Naive thymus-derived CD4-positive, alpha-beta T cell (primary cell): ENCODE measurements at regions of chr2 and their contacts with region 1.

Region 1: GRCh38 chr2:53970724-53971602 is at the start of gene PSME4:
- DNase-seq: peak; percentile 80 to 95 (median 90)
- ATAC-seq: peak; percentile 97
- H3K4me3 ChIP-seq: peak within 1 kb of the TSS; percentile 84
- H3K4me3 Mint-ChIP-seq: peak within 1 kb of the TSS; percentile 89 to 100 (median 96)
- H3K27ac ChIP-seq: peak within 1 kb of the TSS; percentile 93
- H3K27ac Mint-ChIP-seq: peak within 1 kb of the TSS; percentile 91 to 99 (median 95)
- H3K4me1 ChIP-seq: peaks cover 17 to 21% of the 10 kb centered on the region in 2 donors
- H3K4me1 Mint-ChIP-seq: peaks cover 37 to 65% (median 54%) of the 10 kb centered on the region in 7 donors
- H3K27me3 ChIP-seq: no peaks in the 10 kb centered on the region
- H3K27me3 Mint-ChIP-seq: no peaks in the 10 kb centered on the region
- total RNA-seq, gene PSME4: 48.8 to 80.1 (median 54.4) TPM

Region 2: GRCh38 chr2:53767405-53768241 is 203.3 kb before region 1 on chr2 and contains the start of gene CHAC2:
- CTCF ChIA-PET with region 1: no interaction called
- POLR2A ChIA-PET with region 1: no interaction called
- intact Hi-C with region 1: loop called (anchors 5 kb)
- DNase-seq: peak; percentile 74 to 86 (median 84)
- ATAC-seq: peak; percentile 93
- H3K4me3 ChIP-seq: peak within 1 kb of the TSS; percentile 80
- H3K4me3 Mint-ChIP-seq: peak within 1 kb of the TSS; percentile 88 to 98 (median 92)
- H3K27ac ChIP-seq: peak within 1 kb of the TSS; percentile 86
- H3K27ac Mint-ChIP-seq: peak within 1 kb of the TSS; percentile 60 to 99 (median 90)
- H3K4me1 ChIP-seq: peaks cover 0 to 8% of the 10 kb centered on the region in 2 donors
- H3K4me1 Mint-ChIP-seq: peaks cover 7 to 41% (median 33%) of the 10 kb centered on the region in 7 donors
- H3K27me3 ChIP-seq: no peaks in the 10 kb centered on the region
- H3K27me3 Mint-ChIP-seq: no peaks in the 10 kb centered on the region
- total RNA-seq, gene CHAC2: 0.29 to 12.1 (median 1.2) TPM

Region 3: GRCh38 chr2:53958443-53958842 is 12.5 kb before region 1 on chr2:
- CTCF ChIA-PET with region 1: no interaction called
- POLR2A ChIA-PET with region 1: interaction called, 18 read pairs
- intact Hi-C with region 1: no loop called
- DNase-seq: no peak
- ATAC-seq: no peak
- H3K4me3 ChIP-seq: no peak overlapping the region
- H3K4me3 Mint-ChIP-seq: no peak overlapping the region
- H3K27ac ChIP-seq: no peak overlapping the region
- H3K27ac Mint-ChIP-seq: peak overlapping the region in 1 of 9 donors; percentile 13
- H3K4me1 ChIP-seq: peaks cover 5 to 9% of the 10 kb centered on the region in 2 donors
- H3K4me1 Mint-ChIP-seq: peaks cover 21 to 71% (median 50%) of the 10 kb centered on the region in 7 donors
- H3K27me3 ChIP-seq: no peaks in the 10 kb centered on the region
- H3K27me3 Mint-ChIP-seq: no peaks in the 10 kb centered on the region

Region 4: DNA sequence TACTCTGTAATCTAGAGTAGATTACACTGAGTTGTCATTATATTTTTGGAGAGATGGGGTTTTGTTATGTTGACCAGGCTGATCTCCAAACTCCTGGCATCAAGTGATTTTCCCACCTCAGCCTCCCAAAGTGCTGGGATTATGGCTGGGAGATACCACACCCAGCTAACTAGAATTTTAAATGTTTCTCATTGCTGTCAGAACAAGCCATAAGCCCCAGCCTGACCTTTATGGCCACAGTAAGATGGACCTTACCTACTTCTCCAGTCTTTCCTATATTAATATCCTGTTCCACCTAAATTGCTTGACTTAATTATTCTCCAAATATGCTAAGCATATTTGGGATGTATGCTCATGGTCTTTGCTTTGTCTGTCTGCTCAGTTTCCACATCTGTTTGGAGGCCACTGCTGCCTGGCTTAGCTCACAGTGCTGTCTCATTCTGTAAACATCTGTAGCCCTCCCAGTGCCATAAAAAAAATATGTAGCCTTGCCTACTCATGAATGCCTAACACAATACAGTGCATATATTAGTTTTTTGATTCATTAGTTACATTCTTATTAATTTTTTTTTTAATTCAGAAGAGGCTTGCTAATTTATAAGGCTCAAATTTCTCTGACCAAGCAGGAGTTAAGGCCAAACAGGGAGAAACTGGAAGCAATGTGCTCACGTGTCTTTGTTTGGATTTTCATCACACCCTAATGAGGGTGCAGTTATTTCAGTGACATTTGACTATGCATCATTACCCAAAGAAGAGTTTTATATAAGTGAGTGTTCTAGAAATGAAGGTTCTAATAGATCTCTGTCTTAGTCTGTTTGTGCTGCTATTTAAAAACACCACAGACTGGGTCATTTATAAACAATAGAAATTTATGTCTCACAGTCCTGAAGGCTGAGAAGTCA is 45.1 kb after region 1 on chr2:
- CTCF ChIA-PET with region 1: no interaction called
- POLR2A ChIA-PET with region 1: interaction called, 25 read pairs
- intact Hi-C with region 1: loop called in 1 of 2 experiments (anchors 1 kb)
- DNase-seq: no peak
- ATAC-seq: no peak
- H3K4me3 ChIP-seq: no peak overlapping the region
- H3K4me3 Mint-ChIP-seq: peak overlapping the region in 3 of 10 donors; percentile 6 to 40 (median 35)
- H3K27ac ChIP-seq: no peak overlapping the region
- H3K27ac Mint-ChIP-seq: peak overlapping the region; percentile 63 to 92 (median 84)
- H3K4me1 ChIP-seq: peaks cover 10 to 25% of the 10 kb centered on the region in 2 donors
- H3K4me1 Mint-ChIP-seq: peaks cover 24 to 52% (median 45%) of the 10 kb centered on the region in 7 donors
- H3K27me3 ChIP-seq: no peaks in the 10 kb centered on the region
- H3K27me3 Mint-ChIP-seq: no peaks in the 10 kb centered on the region

Region 5: GRCh38 chr2:54081574-54081973 is 110.6 kb after region 1 on chr2:
- CTCF ChIA-PET with region 1: no interaction called
- POLR2A ChIA-PET with region 1: interaction called, 3 read pairs
- intact Hi-C with region 1: loop called in 1 of 2 experiments (anchors 2 kb)
- DNase-seq: peak in 1 of 9 donors; percentile 33
- ATAC-seq: no peak
- H3K4me3 ChIP-seq: no peak overlapping the region
- H3K4me3 Mint-ChIP-seq: no peak overlapping the region
- H3K27ac ChIP-seq: no peak overlapping the region
- H3K27ac Mint-ChIP-seq: no peak overlapping the region
- H3K4me1 ChIP-seq: no peaks in the 10 kb centered on the region
- H3K4me1 Mint-ChIP-seq: peaks cover 0 to 9% (median 0%) of the 10 kb centered on the region in 7 donors
- H3K27me3 ChIP-seq: no peaks in the 10 kb centered on the region
- H3K27me3 Mint-ChIP-seq: no peaks in the 10 kb centered on the region